ENCODE measurements at regions of chr11 and their contacts with region 1.

Region 1: DNA sequence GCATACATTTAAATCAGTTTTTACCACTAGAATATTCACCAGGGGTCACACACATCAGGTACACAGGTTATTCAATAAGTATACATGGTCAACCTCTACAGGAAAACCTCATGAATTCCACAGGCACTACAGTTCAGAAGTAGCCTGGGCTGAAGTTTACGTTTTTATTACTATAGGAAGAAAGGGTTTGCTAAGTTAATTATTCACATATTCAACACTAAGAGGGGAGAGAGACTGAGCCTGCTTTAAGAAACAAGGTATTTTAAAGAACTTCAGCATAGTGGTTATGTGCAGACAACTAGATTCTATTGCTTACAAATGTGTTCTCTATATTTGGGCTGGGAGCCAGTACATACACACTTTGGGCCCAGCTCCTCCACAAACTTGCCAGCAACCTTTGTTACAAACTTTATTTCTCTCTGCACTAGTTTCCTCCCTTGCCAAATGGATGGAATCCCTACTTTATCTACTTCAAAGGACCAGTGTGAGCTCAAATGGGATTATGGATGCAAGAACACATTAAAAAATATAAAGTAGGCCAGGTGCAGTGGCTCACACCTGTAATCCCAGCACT is 31.9 kb downstream of the IL18BP start:
- DNase-seq: no peak
- H3K4me3 ChIP-seq: no peak overlapping the region
- H3K4me3 Mint-ChIP-seq: no peak overlapping the region
- H3K27ac Mint-ChIP-seq: peak overlapping the region; percentile 58
- H3K4me1 ChIP-seq: peaks cover 9% of the 10 kb centered on the region
- H3K4me1 Mint-ChIP-seq: peaks cover 12% of the 10 kb centered on the region
- H3K27me3 ChIP-seq: no peaks in the 10 kb centered on the region
- H3K27me3 Mint-ChIP-seq: no peaks in the 10 kb centered on the region
- CTCF ChIP-seq: no peak

Region 2: GRCh38 chr11:72040726-72041441 is 10.3 kb after region 1 on chr11:
- CTCF ChIA-PET with region 1: interaction called, 49 read pairs
- POLR2A ChIA-PET with region 1: interaction called, 4 read pairs
- intact Hi-C with region 1: loop called (anchors 1 kb)
- DNase-seq: peak; percentile 37 to 56
- H3K4me3 ChIP-seq: peak overlapping the region; percentile 16
- H3K4me3 Mint-ChIP-seq: no peak overlapping the region
- H3K27ac Mint-ChIP-seq: no peak overlapping the region
- H3K4me1 ChIP-seq: peaks cover 31% of the 10 kb centered on the region
- H3K4me1 Mint-ChIP-seq: peaks cover 12% of the 10 kb centered on the region
- H3K27me3 ChIP-seq: no peaks in the 10 kb centered on the region
- H3K27me3 Mint-ChIP-seq: no peaks in the 10 kb centered on the region
- CTCF ChIP-seq: no peak

Region 3: GRCh38 chr11:72091005-72091691 is 60.6 kb after region 1 on chr11:
- CTCF ChIA-PET with region 1: interaction called, 158 read pairs
- POLR2A ChIA-PET with region 1: interaction called, 13 read pairs
- intact Hi-C with region 1: loop called (anchors 1 kb)
- DNase-seq: peak; percentile 88 to 91
- H3K4me3 ChIP-seq: no peak overlapping the region
- H3K4me3 Mint-ChIP-seq: no peak overlapping the region
- H3K27ac Mint-ChIP-seq: no peak overlapping the region
- H3K4me1 ChIP-seq: peaks cover 6% of the 10 kb centered on the region
- H3K4me1 Mint-ChIP-seq: peaks cover 14% of the 10 kb centered on the region
- H3K27me3 ChIP-seq: no peaks in the 10 kb centered on the region
- H3K27me3 Mint-ChIP-seq: no peaks in the 10 kb centered on the region
- CTCF ChIP-seq: peak; percentile 97 to 99

Region 4: GRCh38 chr11:72179804-72180396 is 149.3 kb after region 1 on chr11:
- CTCF ChIA-PET with region 1: interaction called, 54 read pairs
- POLR2A ChIA-PET with region 1: no interaction called
- intact Hi-C with region 1: loop called (anchors 1 kb)
- DNase-seq: no peak
- H3K4me3 ChIP-seq: no peak overlapping the region
- H3K4me3 Mint-ChIP-seq: no peak overlapping the region
- H3K27ac Mint-ChIP-seq: peak overlapping the region; percentile 40
- H3K4me1 ChIP-seq: peaks cover 24% of the 10 kb centered on the region
- H3K4me1 Mint-ChIP-seq: peaks cover 27% of the 10 kb centered on the region
- H3K27me3 ChIP-seq: no peaks in the 10 kb centered on the region
- H3K27me3 Mint-ChIP-seq: no peaks in the 10 kb centered on the region
- CTCF ChIP-seq: no peak

Region 5: DNA sequence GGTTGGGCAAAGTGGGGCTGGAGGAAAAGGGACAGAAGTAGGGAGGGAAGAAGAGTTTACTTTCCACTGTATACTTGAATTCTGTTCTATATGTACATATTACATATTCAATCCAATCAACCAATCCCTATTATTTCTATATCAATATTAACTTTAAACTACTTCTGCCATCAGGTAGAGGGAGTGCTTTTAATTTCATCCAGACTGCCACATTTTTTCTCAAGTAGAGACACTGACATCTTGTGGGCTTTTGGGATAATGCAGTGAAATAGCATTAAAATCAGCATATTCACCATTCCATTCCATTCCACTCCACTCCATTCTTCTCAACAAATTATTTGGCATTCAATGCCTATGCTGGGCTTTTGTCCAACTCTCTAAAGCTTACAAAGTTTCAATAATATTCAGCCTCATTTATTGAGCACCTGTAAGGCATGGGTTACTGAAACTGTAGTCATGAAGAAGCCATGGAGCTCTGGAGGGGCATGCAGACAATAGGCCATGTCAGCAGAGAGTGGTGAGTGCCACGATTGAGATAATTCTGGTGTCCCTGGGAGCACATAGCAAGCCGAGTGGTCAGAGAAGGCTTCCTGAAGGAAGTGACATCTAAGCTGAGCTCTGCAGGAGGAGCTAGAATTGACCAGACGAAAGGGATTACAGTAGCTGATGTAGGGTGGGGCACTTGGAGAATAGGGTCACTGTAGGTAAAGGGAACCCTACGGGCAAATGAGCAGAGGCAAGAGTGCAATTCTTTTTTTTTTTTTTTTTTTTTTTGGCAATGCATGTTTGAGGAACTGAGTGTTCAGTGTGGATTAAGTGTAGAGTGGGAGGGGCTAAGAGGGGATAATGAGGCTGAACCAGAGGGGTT is 416.6 kb after region 1 on chr11:
- CTCF ChIA-PET with region 1: interaction called, 3 read pairs
- POLR2A ChIA-PET with region 1: no interaction called
- intact Hi-C with region 1: loop called (anchors 1 kb)
- DNase-seq: peak in 1 of 2 experiments; percentile 68
- H3K4me3 ChIP-seq: no peak overlapping the region
- H3K4me3 Mint-ChIP-seq: no peak overlapping the region
- H3K27ac Mint-ChIP-seq: no peak overlapping the region
- H3K4me1 ChIP-seq: no peaks in the 10 kb centered on the region
- H3K4me1 Mint-ChIP-seq: no peaks in the 10 kb centered on the region
- H3K27me3 ChIP-seq: no peaks in the 10 kb centered on the region
- H3K27me3 Mint-ChIP-seq: peaks cover 10% of the 10 kb centered on the region
- CTCF ChIP-seq: peak; percentile 93 to 96

Measured in Caco-2 (cell line).